PC-9 (cell line): ENCODE measurements at regions of chr17 and their contacts with region 1.

Region 1: DNA sequence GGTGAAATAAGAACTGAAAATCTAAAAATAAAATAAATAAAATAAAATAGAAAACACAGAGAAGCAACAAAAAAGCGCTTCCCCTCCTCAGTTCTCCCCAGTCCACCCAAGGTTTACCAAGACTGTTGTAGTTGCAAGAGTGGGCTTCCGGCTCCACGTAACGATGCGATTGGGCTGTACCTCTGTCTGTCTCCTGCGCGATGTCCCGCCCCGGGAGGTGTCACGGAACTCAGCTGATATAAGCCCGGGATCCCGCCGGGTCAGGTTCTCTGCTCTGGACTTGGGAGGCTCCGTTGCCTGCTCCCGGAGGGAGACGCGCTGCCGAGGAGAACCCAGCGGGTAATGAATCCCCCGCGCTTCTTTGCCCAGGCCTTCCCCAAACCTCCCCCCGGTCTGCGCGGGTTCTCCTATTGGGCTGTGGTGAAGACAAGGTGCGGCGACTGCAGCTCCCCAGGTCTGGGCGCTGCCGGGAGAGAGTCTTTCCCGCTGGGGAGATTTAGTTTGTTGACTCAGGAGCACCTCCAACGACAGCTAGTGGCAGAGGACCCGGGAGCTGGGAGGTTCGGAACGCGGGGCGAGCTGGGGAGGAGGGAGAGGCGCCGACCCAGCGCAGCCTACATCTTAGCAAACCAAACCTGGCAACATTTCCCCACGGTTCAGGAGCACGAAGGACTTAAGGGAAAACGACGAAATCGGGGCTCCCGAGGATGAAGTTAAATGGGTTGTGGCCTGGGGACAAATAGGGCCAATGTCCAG is at the start of gene SLFN5:
- DNase-seq: peak; percentile 73 to 90
- H3K4me3 ChIP-seq: peak within 1 kb of the TSS; percentile 86
- H3K27ac ChIP-seq: peak within 1 kb of the TSS; percentile 99
- H3K4me1 ChIP-seq: peaks cover 29% of the 10 kb centered on the region
- H3K27me3 ChIP-seq: peaks cover 1% of the 10 kb centered on the region; the same call in 1 of the 2 replicates
- CTCF ChIP-seq: no peak
- total RNA-seq, gene SLFN5: 16.1 and 17.3 TPM in 2 replicates

Region 2: DNA sequence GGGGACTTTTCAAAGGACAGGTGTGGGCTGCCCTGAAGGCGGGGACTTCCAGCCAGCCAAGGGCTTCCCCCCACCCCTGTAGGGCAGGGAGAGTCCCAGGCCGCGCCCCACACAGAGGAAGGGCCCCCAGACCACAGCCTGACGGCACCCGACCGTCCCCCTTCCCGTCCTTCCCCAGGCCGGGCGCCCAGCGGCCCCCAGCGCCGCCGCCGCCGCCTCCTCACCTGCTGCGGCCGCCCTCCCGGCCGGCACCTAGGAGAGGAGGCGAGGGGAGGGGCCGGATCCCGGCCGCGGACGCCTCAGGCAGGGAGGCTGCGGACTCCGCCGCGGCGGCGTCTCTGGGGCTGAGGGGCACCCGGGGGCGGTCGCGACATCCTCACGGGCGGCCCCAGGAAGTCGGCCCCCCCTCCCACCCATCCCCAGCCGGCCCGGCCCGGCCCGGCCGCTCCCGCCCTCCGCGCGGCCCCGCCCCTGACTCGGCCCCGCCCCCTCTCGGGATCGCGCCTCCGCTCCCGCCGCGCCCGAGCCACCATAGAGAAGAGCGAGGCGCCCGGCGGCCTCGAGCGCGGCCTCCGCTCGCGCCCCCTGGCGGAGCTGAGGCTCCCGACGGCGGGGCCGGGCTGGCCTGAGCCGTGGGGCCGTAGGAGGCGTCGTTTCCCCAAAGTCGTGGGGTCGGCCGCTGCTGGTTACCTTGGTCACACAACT is 153.9 kb before region 1 on chr17:
- CTCF ChIA-PET with region 1: no interaction called
- POLR2A ChIA-PET with region 1: no interaction called
- intact Hi-C with region 1: loop called (anchors 5 kb)
- DNase-seq: peak; percentile 55 to 84
- H3K4me3 ChIP-seq: peak overlapping the region; percentile 80
- H3K27ac ChIP-seq: peak overlapping the region; percentile 78
- H3K4me1 ChIP-seq: peaks cover 42% of the 10 kb centered on the region
- H3K27me3 ChIP-seq: no peaks in the 10 kb centered on the region
- CTCF ChIP-seq: no peak; the same call in 1 of the 2 replicates

Region 3: DNA sequence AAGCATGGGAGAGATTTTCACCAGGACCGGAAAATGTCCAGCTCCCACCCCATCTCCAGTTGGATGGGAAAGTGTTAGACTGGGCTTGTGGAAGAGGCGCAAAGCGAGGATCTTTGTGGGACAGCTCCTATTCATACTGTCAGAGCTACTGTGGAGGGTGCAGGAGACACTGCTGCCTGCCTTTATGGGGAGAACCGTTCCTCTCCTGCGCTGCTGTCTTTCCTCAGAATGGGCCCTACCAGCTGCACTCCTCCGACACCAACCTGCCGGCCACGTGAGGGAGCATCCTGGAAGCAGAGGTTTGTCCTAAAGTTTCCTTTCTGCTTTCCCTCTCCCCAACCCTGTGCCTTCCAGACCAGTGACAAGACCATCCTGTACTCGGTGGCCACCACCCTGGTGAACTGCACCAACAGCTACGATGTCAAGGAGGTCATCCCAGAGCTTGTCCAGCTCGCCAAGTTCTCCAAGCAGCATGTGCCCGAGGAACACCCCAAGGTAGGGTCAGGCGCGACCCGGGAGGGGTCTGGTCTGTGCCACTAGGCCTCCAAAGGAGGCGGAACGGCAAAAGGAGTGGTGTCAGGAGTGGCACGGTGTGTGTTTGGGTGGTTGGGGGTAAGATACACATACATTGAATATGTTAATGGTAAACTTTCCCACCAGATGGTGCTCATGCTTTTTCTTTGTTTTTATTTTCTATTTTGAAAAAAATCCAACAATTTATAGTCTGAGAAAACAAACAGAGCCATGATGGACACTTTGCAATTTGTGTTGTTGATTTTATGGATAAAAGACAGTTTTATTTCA is 71.8 kb before region 1 on chr17:
- CTCF ChIA-PET with region 1: no interaction called
- POLR2A ChIA-PET with region 1: no interaction called
- intact Hi-C with region 1: no loop called
- DNase-seq: no peak
- H3K4me3 ChIP-seq: no peak overlapping the region
- H3K27ac ChIP-seq: no peak overlapping the region
- H3K4me1 ChIP-seq: no peaks in the 10 kb centered on the region
- H3K27me3 ChIP-seq: 0 out of 2 replicates have a peak, but pooled peaks cover 11% of the 10 kb centered on the region
- CTCF ChIP-seq: no peak

Region 4: DNA sequence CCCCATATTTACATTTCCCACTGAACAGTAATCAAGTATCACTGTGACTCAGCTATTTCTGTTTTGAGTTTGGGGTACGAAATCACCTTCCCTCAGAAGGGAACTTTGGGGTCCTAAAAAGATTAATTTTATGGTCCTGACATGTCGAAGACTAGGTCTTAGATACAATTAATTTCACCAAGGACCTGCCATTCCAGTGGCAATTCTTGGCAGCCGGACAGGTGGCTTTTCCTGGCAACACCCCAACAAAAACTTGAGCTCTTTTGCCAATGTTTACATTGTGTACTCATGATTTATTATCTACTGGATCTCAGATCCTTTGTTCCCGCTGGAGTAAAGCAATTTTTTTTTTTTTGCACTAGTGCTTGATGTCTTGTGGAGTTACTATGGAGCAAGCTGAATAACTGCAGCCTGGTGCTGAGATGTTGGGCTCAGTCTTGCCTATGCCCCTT is 14.3 kb after region 1 on chr17:
- CTCF ChIA-PET with region 1: no interaction called
- POLR2A ChIA-PET with region 1: interaction called, 4 read pairs
- intact Hi-C with region 1: loop called (anchors 1 kb)
- DNase-seq: peak; percentile 86 to 92
- H3K4me3 ChIP-seq: 0 out of 2 replicates have a peak overlapping the region, but pooled peaks have one; percentile 5
- H3K27ac ChIP-seq: peak overlapping the region; percentile 50
- H3K4me1 ChIP-seq: peaks cover 42% of the 10 kb centered on the region
- H3K27me3 ChIP-seq: no peaks in the 10 kb centered on the region
- CTCF ChIP-seq: no peak

Region 5: GRCh38 chr17:35286120-35286781 is 43.3 kb after region 1 on chr17:
- CTCF ChIA-PET with region 1: no interaction called
- POLR2A ChIA-PET with region 1: no interaction called
- intact Hi-C with region 1: no loop called
- DNase-seq: no peak
- H3K4me3 ChIP-seq: no peak overlapping the region
- H3K27ac ChIP-seq: no peak overlapping the region
- H3K4me1 ChIP-seq: no peaks in the 10 kb centered on the region
- H3K27me3 ChIP-seq: peaks cover 13% of the 10 kb centered on the region; the same call in 1 of the 2 replicates
- CTCF ChIP-seq: no peak

Region 6: GRCh38 chr17:35312790-35313711 is 70.1 kb after region 1 on chr17:
- CTCF ChIA-PET with region 1: no interaction called
- POLR2A ChIA-PET with region 1: interaction called, 5 read pairs
- intact Hi-C with region 1: loop called (anchors 2 kb)
- DNase-seq: peak in 1 of 2 experiments; percentile 22
- H3K4me3 ChIP-seq: no peak overlapping the region
- H3K27ac ChIP-seq: no peak overlapping the region
- H3K4me1 ChIP-seq: no peaks in the 10 kb centered on the region
- H3K27me3 ChIP-seq: peaks cover 4% of the 10 kb centered on the region; the same call in 1 of the 2 replicates
- CTCF ChIP-seq: peak; percentile 82

Region 7: DNA sequence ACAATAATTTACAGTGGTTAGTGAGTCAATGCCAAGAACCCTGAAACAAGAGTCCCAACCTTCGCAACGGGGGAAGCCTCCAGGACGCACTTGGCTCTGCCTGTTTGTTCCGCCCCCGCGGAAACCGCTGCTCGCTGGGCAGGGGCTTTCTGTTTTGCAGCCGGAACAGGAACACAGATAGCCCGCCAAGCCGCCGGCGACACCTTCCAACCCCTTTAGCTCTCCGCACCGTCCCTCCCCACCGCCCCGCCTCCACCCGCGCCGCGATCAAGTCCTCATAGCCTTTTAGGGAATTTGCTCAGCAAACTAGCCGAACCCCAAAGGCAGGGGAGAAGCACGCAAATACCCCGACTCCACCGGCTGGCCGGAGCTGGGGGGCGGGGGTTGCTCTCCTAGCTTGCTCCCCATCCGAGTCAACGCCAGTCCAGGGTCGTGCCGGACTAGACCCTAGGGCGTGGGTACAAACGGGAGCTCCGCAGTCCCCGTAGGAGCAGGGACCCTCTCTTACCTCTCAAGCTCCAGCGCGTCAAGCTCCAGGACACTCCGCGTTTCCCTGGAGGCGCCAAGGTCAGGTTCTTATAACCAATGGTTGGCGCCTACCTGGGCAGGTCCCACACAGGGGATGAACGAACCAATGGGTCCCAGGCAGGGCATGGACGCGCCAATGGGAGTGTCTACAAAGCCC is 205.4 kb after region 1 on chr17 and contains the start of gene SLFN13:
- CTCF ChIA-PET with region 1: no interaction called
- POLR2A ChIA-PET with region 1: interaction called, 5 read pairs
- intact Hi-C with region 1: loop called (anchors 5 kb)
- DNase-seq: peak; percentile 36 to 72
- H3K4me3 ChIP-seq: peak within 1 kb of the TSS; percentile 47; the same call in 1 of the 2 replicates
- H3K27ac ChIP-seq: no peak within 1 kb of the TSS
- H3K4me1 ChIP-seq: no peaks in the 10 kb centered on the region
- H3K27me3 ChIP-seq: peaks cover 31% of the 10 kb centered on the region
- CTCF ChIP-seq: no peak
- total RNA-seq, gene SLFN13: 22.1 and 38.5 TPM in 2 replicates